Lower leg skin (tissue), 4 donors: ENCODE measurements at regions of chr11 and their contacts with region 1.

Region 1: GRCh38 chr11:10798330-10798928 is 10.3 kb downstream of the EIF4G2 start:
- DNase-seq: no peak
- H3K4me3 ChIP-seq: no peak overlapping the region
- CTCF ChIP-seq: no peak
- POLR2A ChIP-seq: no peak

Region 2: DNA sequence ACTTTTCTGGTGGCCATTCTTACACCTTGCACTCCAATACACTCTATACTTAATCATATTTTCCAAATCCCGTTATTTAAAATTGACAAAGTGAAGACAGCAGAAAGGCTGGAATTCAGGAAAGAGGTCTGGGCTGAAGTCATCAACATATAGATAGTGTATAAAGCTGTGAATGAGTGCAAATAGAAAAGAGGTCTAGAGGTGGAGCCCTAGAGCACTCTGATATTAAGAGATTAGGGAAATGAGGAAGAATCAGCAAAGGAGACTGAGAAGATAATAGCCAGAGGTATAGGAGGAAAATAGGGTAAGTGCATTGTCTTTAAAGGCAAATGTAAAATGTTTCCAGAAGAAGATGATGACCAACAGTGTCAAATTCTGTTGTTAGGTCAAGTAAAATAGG is 39.5 kb before region 1 on chr11:
- intact Hi-C with region 1: loop called (anchors 1 kb)
- DNase-seq: no peak
- H3K4me3 ChIP-seq: no peak overlapping the region
- CTCF ChIP-seq: no peak
- POLR2A ChIP-seq: no peak